Aorta (tissue), 5 donors: ENCODE measurements at regions of chr7 and their contacts with region 1.

Region 1: DNA sequence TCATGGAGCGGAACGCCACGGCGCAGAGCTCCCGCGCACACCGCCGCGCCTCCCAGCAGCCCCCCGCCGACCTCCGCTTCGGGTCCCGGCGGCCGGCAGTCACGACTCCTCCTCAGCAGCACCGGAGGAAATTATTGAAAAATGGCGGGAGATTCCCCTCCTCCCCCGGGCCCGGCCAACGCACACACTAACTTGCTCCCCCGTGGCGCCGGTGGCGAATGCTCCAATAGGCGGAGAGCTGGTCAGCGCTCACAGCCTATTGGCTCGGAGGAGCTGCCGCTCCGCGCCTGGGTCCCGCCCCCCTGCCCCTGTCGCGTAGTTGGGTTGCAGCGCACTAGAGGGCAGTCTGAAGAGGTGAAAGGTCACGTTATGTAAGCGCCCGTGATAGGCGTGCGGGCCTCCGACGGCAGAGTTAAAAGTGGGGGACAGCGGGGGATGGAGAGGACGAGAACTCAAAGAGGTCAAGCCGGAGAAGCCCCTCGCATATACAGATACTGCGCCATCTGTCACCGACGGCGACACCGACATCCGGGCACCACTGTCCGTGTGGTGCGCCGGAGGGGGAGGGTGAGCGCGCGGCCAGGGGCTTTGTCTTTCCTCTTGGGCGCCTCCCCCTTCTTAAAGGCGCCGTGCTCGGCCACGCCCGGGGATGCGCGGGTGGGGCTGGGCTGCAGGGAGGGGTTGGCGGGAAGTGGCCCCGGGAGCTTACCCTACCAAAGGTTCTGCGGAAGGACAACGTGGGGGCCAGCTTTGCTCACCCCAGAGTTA is at the start of gene BAZ1B:
- DNase-seq: peak; percentile 98 to 99
- ATAC-seq: peak; percentile 100
- H3K4me3 ChIP-seq: peak within 1 kb of the TSS; percentile 88 to 100
- H3K27ac ChIP-seq: peak within 1 kb of the TSS; percentile 78
- H3K4me1 ChIP-seq: peaks cover 0 to 7% of the 10 kb centered on the region in 2 donors
- H3K27me3 ChIP-seq: no peaks in the 10 kb centered on the region
- total RNA-seq, gene BAZ1B: 49.3 to 60.0 TPM

Region 2: DNA sequence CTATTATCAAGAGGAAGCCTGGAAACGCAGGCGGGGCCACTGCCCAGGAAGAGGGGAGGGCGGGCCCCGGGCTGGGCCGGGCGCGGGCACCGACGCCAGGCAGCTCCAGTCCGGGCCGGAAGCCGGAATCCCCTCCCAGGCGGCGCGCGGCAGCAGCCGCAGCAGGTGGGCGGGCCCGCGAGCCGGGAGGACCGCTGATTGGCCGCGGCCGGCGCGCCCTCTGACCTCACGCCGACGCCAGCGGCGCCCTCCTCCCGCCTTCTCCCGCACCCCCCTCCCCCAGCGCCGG is 34.8 kb after region 1 on chr7:
- intact Hi-C with region 1: loop called (anchors 2 to 5 kb)
- DNase-seq: peak; percentile 97 to 98
- ATAC-seq: peak; percentile 97
- H3K4me3 ChIP-seq: peak overlapping the region; percentile 66 to 79
- H3K27ac ChIP-seq: peak overlapping the region; percentile 92 to 94
- H3K4me1 ChIP-seq: peaks cover 0 to 3% of the 10 kb centered on the region in 2 donors
- H3K27me3 ChIP-seq: no peaks in the 10 kb centered on the region

Region 3: GRCh38 chr7:73578342-73579127 is 56.2 kb after region 1 on chr7 and contains the start of gene TBL2:
- intact Hi-C with region 1: loop called in 1 of 2 experiments (anchors 2 kb)
- DNase-seq: peak; percentile 99 to 100
- ATAC-seq: peak; percentile 98
- H3K4me3 ChIP-seq: peak within 1 kb of the TSS; percentile 38 to 85
- H3K27ac ChIP-seq: peak within 1 kb of the TSS in 1 of 2 donors; percentile 61
- H3K4me1 ChIP-seq: no peaks in the 10 kb centered on the region
- H3K27me3 ChIP-seq: no peaks in the 10 kb centered on the region
- total RNA-seq, gene TBL2: 26.5 to 27.7 TPM

Region 4: DNA sequence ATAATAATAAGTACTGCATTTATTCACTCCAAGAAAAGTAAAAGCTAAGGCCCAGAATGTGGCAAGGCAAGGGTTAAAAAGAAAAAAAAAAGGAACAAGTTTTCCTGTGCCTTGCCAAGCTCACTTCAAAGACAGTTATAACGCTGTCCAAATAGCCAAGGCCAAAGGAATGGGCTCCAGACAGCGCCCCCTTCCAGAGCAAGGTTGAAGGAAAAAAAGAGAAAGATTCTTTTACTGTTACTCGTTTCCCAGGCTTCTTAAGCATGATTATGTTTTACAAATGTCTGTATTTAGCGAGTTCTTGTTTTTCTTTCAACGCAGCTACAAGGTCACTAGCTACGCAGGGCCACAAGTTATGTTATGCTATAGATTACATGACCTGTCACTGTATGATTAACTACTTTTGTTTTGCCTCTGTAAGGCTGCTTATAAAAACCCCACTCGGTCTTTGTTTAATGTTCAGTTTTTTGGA is 642.7 kb after region 1 on chr7:
- intact Hi-C with region 1: no loop called
- DNase-seq: no peak
- ATAC-seq: no peak
- H3K4me3 ChIP-seq: no peak overlapping the region
- H3K27ac ChIP-seq: no peak overlapping the region
- H3K4me1 ChIP-seq: no peaks in the 10 kb centered on the region
- H3K27me3 ChIP-seq: no peaks in the 10 kb centered on the region